K562 (cell line): ENCODE measurements at regions of chr5 and their contacts with region 1.

Region 1: DNA sequence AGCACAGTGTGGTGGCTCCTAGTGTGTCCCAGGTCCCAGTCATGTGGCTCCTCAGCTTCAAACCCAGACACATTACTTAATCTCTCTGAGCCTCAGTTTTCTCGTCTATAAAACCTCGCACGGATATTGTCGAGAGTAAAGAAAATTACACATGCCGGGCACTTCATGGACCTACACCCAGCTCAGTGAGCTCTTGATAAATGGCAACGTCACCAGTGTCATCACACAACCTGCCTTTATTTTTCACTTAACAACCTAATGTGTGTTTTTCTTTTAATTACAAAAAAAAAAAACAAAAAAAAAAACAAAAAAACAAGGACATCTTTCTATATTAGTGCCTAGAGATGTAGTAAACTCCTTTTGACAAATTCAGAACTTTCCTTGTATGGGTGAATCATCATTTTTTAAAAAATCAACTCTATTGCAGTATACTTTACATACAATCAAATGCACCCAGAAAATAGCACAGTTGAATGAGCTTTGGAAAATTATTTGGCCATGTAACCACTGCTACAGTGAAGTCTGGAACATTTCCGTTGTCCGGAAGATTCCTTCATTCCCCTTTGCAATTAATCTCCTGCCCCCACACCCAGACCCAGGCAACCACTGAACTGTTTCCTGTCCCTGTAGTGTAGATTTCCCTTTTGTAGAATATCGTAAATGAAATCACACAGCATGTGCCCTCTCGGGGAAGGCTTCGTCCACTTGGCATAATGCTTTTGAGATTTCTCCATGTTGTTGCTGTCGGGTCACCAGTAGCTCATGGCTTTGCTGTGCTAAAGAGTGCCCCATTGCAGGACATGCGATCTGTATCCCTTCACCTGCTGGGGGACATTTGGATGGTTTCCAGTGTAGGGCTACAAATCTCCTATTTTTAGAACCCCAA is 100.4 kb upstream of the LARP1 start:
- DNase-seq: peak in 2 of 4 experiments; percentile 32 to 53
- ATAC-seq: peak; percentile 20
- H3K4me3 ChIP-seq: no peak overlapping the region
- H3K27ac ChIP-seq: peak overlapping the region; percentile 60
- H3K4me1 ChIP-seq: peaks cover 25 to 31% of the 10 kb centered on the region in 2 experiments
- H3K27me3 ChIP-seq: no peaks in the 10 kb centered on the region
- CTCF ChIP-seq: no peak
- EP300 ChIP-seq: peak; percentile 59; the same call in 1 of the 2 replicates
- POLR2A ChIP-seq: no peak
- RAD21 ChIP-seq: no peak

Region 2: DNA sequence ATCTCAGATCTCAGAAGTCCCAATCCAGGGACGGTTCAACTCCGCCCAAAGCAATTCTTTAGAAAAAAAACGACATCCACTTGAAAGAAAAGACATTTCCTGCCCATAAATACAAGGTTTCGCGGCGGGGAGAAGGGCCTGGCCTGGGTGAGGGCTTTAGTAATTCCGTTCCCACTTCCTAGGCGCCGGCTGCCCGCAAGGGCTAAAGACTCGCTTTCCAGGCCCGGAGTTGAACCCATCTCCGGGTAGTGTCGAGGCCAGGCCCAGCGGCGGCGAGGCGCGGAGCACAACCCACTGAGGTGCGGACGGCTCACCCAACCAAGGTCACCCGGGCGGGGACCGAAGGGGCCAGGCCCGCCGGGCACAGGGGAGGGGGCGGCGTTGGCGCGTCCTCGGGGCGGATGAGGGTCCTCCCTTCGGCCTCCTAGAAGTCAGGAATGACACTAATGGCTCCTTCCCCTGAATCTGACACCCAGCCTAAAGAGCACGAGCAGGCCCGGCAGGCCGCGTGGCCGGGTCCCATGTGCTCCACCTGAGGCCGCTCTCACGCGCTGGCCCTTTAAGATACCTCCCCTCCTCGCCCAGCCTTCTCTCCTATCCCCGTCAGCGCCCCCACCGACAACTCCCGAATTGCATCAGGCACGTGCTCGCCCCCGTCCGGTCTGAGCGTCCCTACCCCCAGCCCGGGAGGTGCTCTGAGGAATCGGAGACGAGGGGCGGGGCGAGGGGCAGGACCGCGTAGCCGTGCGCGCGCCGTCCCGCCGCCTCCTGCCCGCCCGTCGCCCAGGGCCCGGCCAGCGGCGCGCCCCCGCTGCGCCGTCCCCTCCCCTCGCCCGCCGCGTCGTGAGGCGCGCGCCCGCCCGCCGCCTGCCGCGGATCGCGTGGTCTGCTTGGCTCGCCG is 100.0 kb after region 1 on chr5:
- CTCF ChIA-PET with region 1: no interaction called
- POLR2A ChIA-PET with region 1: no interaction called
- in situ Hi-C with region 1: no loop called
- intact Hi-C with region 1: loop called (anchors 1 kb)
- DNase-seq: peak; percentile 94 to 99 (median 96)
- ATAC-seq: peak; percentile 86
- H3K4me3 ChIP-seq: peak overlapping the region; percentile 83
- H3K27ac ChIP-seq: peak overlapping the region; percentile 99
- H3K4me1 ChIP-seq: peaks cover 30 to 40% of the 10 kb centered on the region in 2 experiments
- H3K27me3 ChIP-seq: no peaks in the 10 kb centered on the region
- CTCF ChIP-seq: peak; percentile 61 to 90 (median 84)
- EP300 ChIP-seq: peak; percentile 62; the same call in 1 of the 2 replicates
- POLR2A ChIP-seq: peak; percentile 57
- RAD21 ChIP-seq: peak in 1 of 2 experiments; percentile 50; a peak in 2 of 4 replicates

Region 3: DNA sequence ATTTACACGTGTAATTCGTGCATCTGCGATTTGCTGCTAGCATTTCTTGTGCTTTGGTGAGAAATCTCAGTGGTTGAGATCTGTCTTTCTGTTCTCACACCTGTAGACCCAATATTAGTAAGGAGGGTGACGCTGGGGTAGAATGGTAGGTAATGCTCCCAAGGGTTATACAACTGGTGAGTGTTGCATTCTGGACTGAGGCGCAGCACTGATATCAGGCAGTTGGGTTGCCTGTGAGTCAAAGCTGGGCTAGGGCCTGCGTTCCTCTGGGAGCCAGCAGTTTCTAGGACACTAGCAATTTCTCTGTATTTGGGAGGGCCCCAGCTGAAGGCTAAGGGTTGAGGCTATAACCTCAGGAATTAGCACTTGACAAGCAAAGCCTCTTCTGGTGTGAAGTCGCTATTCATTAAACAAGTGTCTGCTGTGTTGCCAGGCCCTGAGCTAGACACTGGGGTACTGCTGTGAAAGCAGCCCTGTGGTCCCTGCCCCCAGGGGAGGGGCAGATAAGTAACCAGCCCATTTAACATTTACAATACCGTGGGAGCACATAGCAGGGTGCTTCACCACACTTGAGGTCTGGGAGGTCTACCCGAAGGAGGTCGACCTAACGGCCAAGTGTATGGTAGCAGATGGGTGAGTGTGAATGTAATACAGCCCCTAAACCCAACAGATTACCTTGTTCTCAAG is 129.2 kb after region 1 on chr5:
- CTCF ChIA-PET with region 1: no interaction called
- POLR2A ChIA-PET with region 1: interaction called, 3 read pairs
- in situ Hi-C with region 1: no loop called
- intact Hi-C with region 1: loop called (anchors 10 kb)
- DNase-seq: peak in 2 of 4 experiments; percentile 33 to 50
- ATAC-seq: peak; percentile 55
- H3K4me3 ChIP-seq: no peak overlapping the region
- H3K27ac ChIP-seq: peak overlapping the region; percentile 52; the same call in 2 of the 3 replicates
- H3K4me1 ChIP-seq: peaks cover 38 to 64% of the 10 kb centered on the region in 2 experiments
- H3K27me3 ChIP-seq: no peaks in the 10 kb centered on the region
- CTCF ChIP-seq: no peak
- EP300 ChIP-seq: no peak
- POLR2A ChIP-seq: no peak
- RAD21 ChIP-seq: no peak

Region 4: GRCh38 chr5:154840435-154841272 is 185.9 kb after region 1 on chr5:
- CTCF ChIA-PET with region 1: no interaction called
- POLR2A ChIA-PET with region 1: interaction called, 3 read pairs
- in situ Hi-C with region 1: no loop called
- intact Hi-C with region 1: loop called (anchors 1 kb)
- DNase-seq: peak; percentile 77 to 89 (median 84)
- ATAC-seq: peak; percentile 88
- H3K4me3 ChIP-seq: no peak overlapping the region
- H3K27ac ChIP-seq: peak overlapping the region; percentile 78
- H3K4me1 ChIP-seq: peaks cover 33 to 50% of the 10 kb centered on the region in 2 experiments
- H3K27me3 ChIP-seq: no peaks in the 10 kb centered on the region
- CTCF ChIP-seq: no peak
- EP300 ChIP-seq: peak; percentile 90
- POLR2A ChIP-seq: no peak
- RAD21 ChIP-seq: peak; percentile 18 to 36; a peak in 2 of 4 replicates

Region 5: DNA sequence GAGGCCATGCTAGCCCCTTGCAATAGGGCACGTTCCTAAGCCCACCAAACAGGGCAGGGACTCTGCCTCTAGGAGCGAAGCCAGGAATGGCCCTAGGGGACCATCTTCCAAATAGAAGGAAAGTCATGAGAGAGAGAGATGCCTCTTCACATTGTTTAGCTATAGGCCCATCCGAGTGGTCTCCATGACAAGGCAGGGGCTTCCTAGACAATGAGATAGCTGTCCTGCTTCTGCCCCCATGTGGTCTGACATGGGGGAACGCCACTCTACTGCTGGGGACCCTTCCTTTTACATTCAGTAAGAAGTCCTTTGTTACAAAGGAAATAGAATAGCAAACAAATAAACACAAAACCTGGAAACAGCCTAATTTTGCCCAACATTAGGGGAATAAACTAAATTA is 340.9 kb after region 1 on chr5:
- CTCF ChIA-PET with region 1: no interaction called
- POLR2A ChIA-PET with region 1: no interaction called
- in situ Hi-C with region 1: loop called (anchors 10 kb)
- intact Hi-C with region 1: no loop called
- DNase-seq: peak in 1 of 4 experiments; percentile 12
- ATAC-seq: peak; percentile 75
- H3K4me3 ChIP-seq: no peak overlapping the region
- H3K27ac ChIP-seq: no peak overlapping the region
- H3K4me1 ChIP-seq: no peaks in the 10 kb centered on the region; a peak in 1 of 5 replicates
- H3K27me3 ChIP-seq: peaks cover 3 to 4% of the 10 kb centered on the region in 2 experiments; a peak in 3 of 5 replicates
- CTCF ChIP-seq: peak; percentile 30 to 45 (median 31); a peak in 4 of 6 replicates
- EP300 ChIP-seq: no peak
- POLR2A ChIP-seq: no peak
- RAD21 ChIP-seq: peak in 1 of 2 experiments; percentile 38; a peak in 2 of 4 replicates